Dendritic cell treated with granulocyte-macrophage colony-stimulating factor and Interleukin-4, amounts not matched to agents 40 ng/mL and 50 ng/mL, for 4 days (primary cell): ENCODE measurements at regions of chr21 and their contacts with region 1.

Region 1: DNA sequence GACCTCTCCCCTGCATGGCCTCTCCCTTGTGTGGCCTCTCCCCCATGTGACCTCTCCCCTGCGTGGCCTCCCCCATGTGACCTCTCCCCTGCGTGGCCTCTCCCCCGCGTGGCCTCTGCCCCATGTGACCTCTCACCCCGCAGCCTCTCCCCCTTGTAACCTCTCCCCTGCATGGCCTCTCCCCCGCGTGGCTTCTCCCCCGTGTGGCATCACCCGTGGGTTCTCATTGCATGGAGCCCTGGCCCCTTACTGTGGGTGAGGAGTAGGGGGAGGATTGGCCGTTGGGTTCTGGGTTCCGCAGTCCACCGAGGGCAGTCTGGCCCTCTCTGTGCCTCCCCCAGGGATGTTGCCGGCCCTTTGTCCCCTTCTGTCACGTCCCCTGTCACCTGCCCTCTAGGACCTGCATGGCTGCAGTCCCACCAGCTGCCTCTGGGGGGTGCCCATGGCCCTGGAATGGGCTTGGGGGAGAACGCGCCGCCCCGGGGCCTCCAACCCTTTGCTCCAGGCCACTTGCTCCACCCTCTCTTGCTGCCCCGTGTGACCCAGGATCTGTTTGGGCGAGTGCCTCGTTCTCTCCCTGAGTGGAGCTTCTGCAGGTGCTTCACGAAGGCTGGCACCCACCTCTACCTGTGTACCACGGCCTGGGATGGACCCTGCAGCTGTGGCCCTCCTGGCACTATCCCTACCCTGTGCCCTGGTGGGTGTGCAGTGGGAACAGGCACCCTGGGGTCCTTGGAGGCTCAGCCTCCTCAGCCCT is 21.3 kb downstream of the RRP1 start:
- H3K4me3 Mint-ChIP-seq: peak overlapping the region; percentile 88
- H3K27ac Mint-ChIP-seq: peak overlapping the region; percentile 71
- H3K4me1 Mint-ChIP-seq: peaks cover 93% of the 10 kb centered on the region
- H3K27me3 Mint-ChIP-seq: peaks cover 7% of the 10 kb centered on the region

Region 2: DNA sequence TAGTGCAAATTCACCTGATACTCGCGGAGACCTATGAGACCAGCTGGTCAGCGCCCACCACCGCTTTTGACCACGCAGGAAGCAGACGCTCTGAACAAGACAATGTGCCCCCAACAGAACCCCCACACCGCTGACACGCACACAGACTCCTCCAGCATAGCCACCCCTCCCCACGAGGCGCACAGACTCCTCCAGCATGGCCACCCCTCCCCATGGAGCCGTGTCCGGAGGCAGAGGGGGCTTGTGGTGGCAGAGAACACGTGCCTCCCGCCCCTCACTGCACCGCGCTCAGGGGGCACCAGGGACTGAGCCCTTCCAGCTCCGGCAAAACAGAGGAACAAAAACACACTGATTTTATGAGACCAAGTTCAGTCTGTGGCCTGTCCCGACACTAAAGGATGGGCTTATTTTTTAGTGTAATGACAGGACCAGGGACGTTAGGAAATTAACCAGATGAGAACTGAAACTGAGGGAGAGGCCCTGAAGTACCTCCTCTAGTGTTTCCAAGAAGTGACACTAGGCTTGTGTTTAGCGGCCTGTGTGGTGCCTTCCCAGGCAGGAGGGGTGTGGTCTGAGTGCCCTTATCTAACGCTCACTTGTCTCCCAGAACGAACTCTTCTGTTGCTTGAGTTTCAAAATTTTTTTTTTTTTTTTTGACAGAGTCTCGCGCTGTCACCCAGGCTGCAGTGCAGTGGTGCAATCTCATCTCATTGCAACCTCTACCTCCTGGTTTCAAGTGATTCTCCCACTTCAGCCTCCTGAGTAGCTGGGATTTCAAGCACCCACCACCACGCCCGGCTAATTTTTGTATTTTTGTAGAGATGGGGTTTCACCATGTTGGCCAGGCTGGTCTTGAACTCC is 44.3 kb after region 1 on chr21:
- intact Hi-C with region 1: loop called (anchors 5 kb)
- H3K4me3 Mint-ChIP-seq: peak overlapping the region; percentile 68
- H3K27ac Mint-ChIP-seq: peak overlapping the region; percentile 96
- H3K4me1 Mint-ChIP-seq: peaks cover 75% of the 10 kb centered on the region
- H3K27me3 Mint-ChIP-seq: no peaks in the 10 kb centered on the region

Region 3: GRCh38 chr21:43874085-43874785 is 63.6 kb after region 1 on chr21:
- intact Hi-C with region 1: loop called (anchors 5 kb)
- H3K4me3 Mint-ChIP-seq: no peak overlapping the region
- H3K27ac Mint-ChIP-seq: no peak overlapping the region
- H3K4me1 Mint-ChIP-seq: peaks cover 68% of the 10 kb centered on the region
- H3K27me3 Mint-ChIP-seq: no peaks in the 10 kb centered on the region

Region 4: DNA sequence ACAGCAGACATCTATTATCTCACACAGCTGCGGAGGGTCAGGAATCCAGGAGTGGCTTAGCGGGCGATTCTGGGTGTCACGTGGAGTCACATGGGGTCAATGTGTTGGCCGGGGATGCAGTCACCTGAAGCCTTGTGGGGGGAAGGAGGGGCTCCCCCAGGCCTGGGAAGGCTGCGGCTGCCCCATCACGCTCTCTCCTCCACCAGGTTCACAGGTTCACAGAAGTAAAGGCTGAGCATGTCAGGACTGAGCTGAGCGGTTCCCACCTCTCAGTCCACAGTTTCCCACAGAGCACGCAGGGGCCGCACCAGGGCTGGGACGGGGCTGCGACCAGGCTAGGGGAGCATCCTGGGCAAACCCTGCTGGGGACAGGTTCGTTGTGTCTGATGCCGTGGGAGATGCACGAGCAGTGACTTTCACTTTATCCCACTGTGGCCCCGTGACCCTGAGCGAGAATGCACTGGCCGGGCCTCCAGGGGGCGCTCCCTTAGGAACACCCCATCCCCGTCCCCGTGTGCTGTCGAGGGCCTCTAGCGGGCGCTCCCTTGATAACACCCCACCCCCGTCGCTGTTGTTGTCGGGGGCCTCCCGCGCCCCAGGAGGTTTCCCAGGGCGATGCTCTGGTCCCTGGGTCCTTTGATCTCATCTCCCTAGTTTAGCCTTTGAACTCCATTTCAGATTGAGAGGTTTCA is 128.2 kb after region 1 on chr21:
- intact Hi-C with region 1: loop called (anchors 1 kb)
- H3K4me3 Mint-ChIP-seq: peak overlapping the region; percentile 75
- H3K27ac Mint-ChIP-seq: peak overlapping the region; percentile 60
- H3K4me1 Mint-ChIP-seq: peaks cover 29% of the 10 kb centered on the region
- H3K27me3 Mint-ChIP-seq: no peaks in the 10 kb centered on the region